Mucosa of descending colon (tissue), 3 donors: ENCODE measurements at regions of chr7 and their contacts with region 1.

Region 1: GRCh38 chr7:70975754-70976153 is 156.2 kb upstream of the GALNT17 start:
- DNase-seq: no peak
- ATAC-seq: no peak
- H3K4me3 ChIP-seq: no peak overlapping the region
- H3K4me1 ChIP-seq: no peaks in the 10 kb centered on the region
- CTCF ChIP-seq: no peak

Region 2: GRCh38 chr7:70953796-70954195 is 22.0 kb before region 1 on chr7:
- intact Hi-C with region 1: loop called in 1 of 2 experiments (anchors 2 kb)
- DNase-seq: no peak
- ATAC-seq: no peak
- H3K4me3 ChIP-seq: no peak overlapping the region
- H3K4me1 ChIP-seq: no peaks in the 10 kb centered on the region
- CTCF ChIP-seq: no peak